ENCODE measurements at regions of chr7 and their contacts with region 1.

Region 1: DNA sequence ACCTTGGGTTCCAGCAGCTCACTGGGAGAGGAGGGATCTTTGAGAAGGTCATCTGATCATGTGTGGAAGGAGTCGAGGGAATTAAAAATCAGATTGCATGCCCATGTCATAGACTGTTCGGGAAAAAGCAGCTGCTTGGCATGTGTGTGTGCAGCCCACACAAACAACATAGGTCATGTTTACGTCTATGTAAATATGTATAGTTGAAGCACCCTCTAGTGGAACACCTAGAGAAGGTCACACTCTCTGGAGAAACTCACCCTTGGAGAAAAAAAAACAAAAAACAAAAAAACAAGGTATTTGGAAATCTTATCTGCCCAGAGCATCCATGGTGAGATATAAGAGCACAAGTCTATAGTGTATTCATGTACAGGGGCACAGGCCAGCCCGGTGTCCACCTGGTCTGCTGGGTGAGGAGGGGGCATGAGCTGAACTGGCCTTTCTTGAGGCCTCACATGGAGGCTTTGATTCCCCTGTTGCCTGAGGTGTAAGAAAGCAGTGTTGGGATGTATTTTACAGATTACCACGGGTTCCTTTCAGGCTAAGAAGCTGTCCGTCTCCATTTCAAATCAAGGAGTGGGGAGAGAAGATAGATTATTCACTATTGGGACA is 98.0 kb downstream of the NPY start:
- DNase-seq: no peak
- H3K4me3 Mint-ChIP-seq: no peak overlapping the region
- H3K27ac Mint-ChIP-seq: no peak overlapping the region
- H3K4me1 Mint-ChIP-seq: no peaks in the 10 kb centered on the region
- H3K27me3 Mint-ChIP-seq: no peaks in the 10 kb centered on the region

Region 2: GRCh38 chr7:23863209-23863798 is 518.7 kb before region 1 on chr7:
- intact Hi-C with region 1: loop called (anchors 2 kb)
- DNase-seq: no peak
- H3K4me3 Mint-ChIP-seq: no peak overlapping the region
- H3K27ac Mint-ChIP-seq: no peak overlapping the region
- H3K4me1 Mint-ChIP-seq: no peaks in the 10 kb centered on the region
- H3K27me3 Mint-ChIP-seq: peaks cover 9% of the 10 kb centered on the region

Region 3: DNA sequence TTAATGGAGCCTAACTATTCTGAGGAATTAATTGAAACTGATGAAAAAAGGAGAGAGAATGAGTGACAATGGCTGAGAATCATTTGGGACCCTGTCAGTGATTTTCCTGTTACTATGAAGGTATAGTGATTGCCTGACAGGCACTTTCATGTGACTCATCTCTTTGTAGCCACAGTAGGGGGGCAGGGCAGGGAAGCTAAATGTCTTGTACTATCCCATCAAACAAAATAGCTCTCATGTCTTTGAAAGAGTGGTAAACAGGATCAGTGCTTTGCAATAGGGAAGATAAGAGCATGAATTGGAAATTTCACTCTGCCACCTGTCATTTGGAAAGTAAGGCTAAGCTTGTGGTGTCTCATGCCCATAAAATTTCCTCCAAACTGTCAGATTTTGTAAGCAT is 469.8 kb after region 1 on chr7:
- intact Hi-C with region 1: no loop called
- DNase-seq: no peak
- H3K4me3 Mint-ChIP-seq: no peak overlapping the region
- H3K27ac Mint-ChIP-seq: no peak overlapping the region
- H3K4me1 Mint-ChIP-seq: peaks cover 52% of the 10 kb centered on the region
- H3K27me3 Mint-ChIP-seq: no peaks in the 10 kb centered on the region